AG04450 (cell line): ENCODE measurements at regions of chr1 and their contacts with region 1.

Region 1: GRCh38 chr1:224065455-224065854 is 48.5 kb upstream of the FBXO28 start:
- DNase-seq: no peak
- H3K4me3 ChIP-seq: no peak overlapping the region
- H3K27ac ChIP-seq: no peak overlapping the region
- H3K27me3 ChIP-seq: no peaks in the 10 kb centered on the region
- CTCF ChIP-seq: no peak

Region 2: DNA sequence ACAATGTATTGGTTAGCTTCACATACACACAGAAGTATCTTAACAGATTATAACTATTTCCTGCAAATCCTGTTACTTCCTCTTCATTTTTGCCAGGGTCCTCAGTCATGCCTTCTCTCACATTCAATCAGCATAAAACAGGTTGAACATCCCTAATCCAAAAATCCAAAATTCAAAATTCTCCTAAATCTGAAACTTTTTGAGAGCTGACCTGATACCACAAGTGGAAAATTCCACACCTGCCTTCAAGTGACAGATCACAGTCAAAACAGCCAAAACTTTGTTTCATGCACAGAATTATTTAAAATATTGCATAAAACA is 14.4 kb before region 1 on chr1:
- CTCF ChIA-PET with region 1: interaction called, 18 read pairs
- POLR2A ChIA-PET with region 1: no interaction called
- DNase-seq: no peak
- H3K4me3 ChIP-seq: no peak overlapping the region
- H3K27ac ChIP-seq: no peak overlapping the region
- H3K27me3 ChIP-seq: no peaks in the 10 kb centered on the region
- CTCF ChIP-seq: no peak